CD8-positive, alpha-beta T cell (primary cell): ENCODE measurements at regions of chr7 and their contacts with region 1.

Region 1: DNA sequence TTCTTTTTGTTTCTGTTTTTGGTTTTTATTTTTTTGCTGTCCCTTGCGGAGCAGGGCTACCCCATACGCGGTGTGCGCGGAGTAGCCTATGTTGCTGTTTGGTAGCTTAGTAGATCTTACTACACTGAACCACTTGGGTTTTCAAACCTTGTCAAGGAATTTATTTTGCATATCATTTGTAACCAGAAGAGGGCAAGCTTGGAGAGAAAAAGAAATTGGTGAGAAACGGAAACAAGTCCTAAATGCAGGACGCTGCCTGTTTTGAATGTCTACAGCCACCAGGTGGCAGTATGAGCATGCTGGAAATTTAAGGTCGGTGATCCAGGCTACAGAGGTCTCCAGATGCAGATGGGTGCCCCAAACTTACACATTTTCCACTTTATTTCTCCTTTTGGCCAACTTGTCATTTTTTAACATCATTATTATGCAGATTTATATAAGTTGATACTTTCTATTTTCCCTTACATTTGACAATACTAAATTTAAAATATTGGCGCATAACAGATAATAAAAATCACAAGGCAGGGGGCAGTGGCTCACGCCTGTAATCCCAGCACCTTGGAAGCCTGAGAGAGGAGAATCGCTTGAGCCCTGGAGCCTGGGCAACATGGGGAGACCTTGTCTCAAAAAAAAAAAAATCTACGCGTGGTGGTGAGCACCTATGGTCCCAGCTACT is 15.3 kb upstream of the TRA2A start:
- DNase-seq: peak; percentile 59 to 92 (median 75)
- ATAC-seq: peak; percentile 95
- H3K4me3 ChIP-seq: no peak overlapping the region
- H3K4me3 Mint-ChIP-seq: no peak overlapping the region
- H3K27ac ChIP-seq: no peak overlapping the region
- H3K27ac Mint-ChIP-seq: no peak overlapping the region
- H3K4me1 ChIP-seq: no peaks in the 10 kb centered on the region
- H3K4me1 Mint-ChIP-seq: peaks cover 9% of the 10 kb centered on the region
- H3K27me3 ChIP-seq: no peaks in the 10 kb centered on the region
- H3K27me3 Mint-ChIP-seq: no peaks in the 10 kb centered on the region
- CTCF ChIP-seq: peak; percentile 97

Region 2: DNA sequence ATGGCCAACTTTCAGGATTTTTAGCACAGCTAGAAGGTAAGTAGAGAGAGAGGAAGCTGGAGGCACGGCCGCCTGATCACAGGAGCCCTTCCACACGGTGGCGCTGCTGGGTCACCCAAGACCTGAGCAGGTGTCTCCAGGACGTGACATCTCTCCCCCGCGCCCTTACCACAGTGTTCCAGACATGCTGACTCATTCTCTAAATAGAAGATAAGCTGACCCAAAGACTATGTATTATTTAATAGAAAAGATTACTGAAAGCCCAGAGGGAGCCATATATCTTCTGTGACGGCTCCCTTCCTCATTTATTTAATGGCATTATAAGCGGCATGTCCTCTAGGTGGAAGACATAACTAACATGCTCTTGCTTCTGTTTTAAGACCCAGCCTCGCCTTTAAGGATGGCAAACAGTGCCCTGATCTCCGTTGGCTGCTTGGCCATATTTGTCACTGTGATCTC is 273.9 kb before region 1 on chr7:
- CTCF ChIA-PET with region 1: interaction called, 9 read pairs
- POLR2A ChIA-PET with region 1: no interaction called
- intact Hi-C with region 1: loop called (anchors 1 to 2 kb)
- DNase-seq: peak; percentile 78 to 91 (median 89)
- ATAC-seq: peak; percentile 97
- H3K4me3 ChIP-seq: peak overlapping the region in 1 of 2 experiments; percentile 16
- H3K4me3 Mint-ChIP-seq: peak overlapping the region; percentile 70
- H3K27ac ChIP-seq: no peak overlapping the region
- H3K27ac Mint-ChIP-seq: no peak overlapping the region
- H3K4me1 ChIP-seq: no peaks in the 10 kb centered on the region
- H3K4me1 Mint-ChIP-seq: peaks cover 4% of the 10 kb centered on the region
- H3K27me3 ChIP-seq: no peaks in the 10 kb centered on the region
- H3K27me3 Mint-ChIP-seq: peaks cover 6% of the 10 kb centered on the region
- CTCF ChIP-seq: peak; percentile 82

Region 3: GRCh38 chr7:23520582-23520981 is 26.5 kb before region 1 on chr7:
- CTCF ChIA-PET with region 1: interaction called, 16 read pairs
- POLR2A ChIA-PET with region 1: no interaction called
- intact Hi-C with region 1: no loop called
- DNase-seq: peak in 1 of 9 experiments; percentile 37
- ATAC-seq: no peak
- H3K4me3 ChIP-seq: no peak overlapping the region
- H3K4me3 Mint-ChIP-seq: no peak overlapping the region
- H3K27ac ChIP-seq: no peak overlapping the region
- H3K27ac Mint-ChIP-seq: no peak overlapping the region
- H3K4me1 ChIP-seq: peaks cover 23% of the 10 kb centered on the region
- H3K4me1 Mint-ChIP-seq: peaks cover 49% of the 10 kb centered on the region
- H3K27me3 ChIP-seq: no peaks in the 10 kb centered on the region
- H3K27me3 Mint-ChIP-seq: no peaks in the 10 kb centered on the region
- CTCF ChIP-seq: no peak

Region 4: DNA sequence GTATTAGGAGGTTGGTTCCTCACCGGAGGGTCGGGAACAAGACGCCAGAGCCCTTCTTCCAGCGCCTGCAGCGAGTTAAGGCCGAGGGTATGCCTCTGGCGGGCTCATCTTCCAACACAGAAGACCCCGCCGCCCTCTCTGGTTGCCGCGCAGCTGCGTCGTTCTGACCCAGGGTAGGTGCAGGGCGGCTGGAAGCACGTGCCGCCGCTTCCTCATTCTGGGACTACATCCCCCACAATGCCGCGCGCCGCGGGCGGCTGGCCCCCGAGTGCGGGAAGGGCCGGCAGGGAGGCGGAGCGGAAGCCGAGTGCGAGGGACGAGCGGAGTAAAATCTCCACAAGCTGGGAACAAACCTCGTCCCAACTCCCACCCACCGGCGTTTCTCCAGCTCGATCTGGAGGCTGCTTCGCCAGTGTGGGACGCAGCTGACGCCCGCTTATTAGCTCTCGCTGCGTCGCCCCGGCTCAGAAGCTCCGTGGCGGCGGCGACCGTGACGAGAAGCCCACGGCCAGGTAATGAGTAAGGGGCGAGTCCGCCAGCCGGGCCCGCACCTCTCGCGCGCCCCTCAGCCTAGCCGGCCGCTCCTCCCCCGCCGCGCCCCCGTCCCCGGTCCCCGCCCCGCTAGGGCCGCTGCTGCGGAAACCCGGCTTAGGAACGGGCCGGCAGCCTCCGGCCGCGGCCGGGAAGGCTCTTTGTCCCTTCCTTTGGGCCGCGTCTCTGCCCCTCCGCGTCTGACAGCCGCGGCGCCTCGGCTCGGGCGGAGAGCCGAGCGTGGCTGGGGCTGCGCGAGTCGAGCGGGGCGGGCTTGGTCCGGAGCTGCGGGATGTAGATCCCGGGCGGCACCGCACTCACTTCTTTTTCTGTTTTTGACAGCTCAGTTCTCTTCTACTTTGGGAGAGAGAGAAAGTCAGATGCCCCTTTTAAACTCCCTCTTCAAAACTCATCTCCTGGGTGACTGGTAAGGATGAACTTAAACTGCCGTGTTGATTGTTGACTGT is 50.4 kb after region 1 on chr7 and contains the start of gene CCDC126:
- CTCF ChIA-PET with region 1: interaction called, 8 read pairs
- POLR2A ChIA-PET with region 1: no interaction called
- intact Hi-C with region 1: loop called (anchors 1 to 2 kb)
- DNase-seq: peak; percentile 57 to 88 (median 81)
- ATAC-seq: peak; percentile 89
- H3K4me3 ChIP-seq: peak within 1 kb of the TSS; percentile 81 to 91
- H3K4me3 Mint-ChIP-seq: peak within 1 kb of the TSS; percentile 85
- H3K27ac ChIP-seq: peak within 1 kb of the TSS; percentile 55 to 63
- H3K27ac Mint-ChIP-seq: peak within 1 kb of the TSS; percentile 49
- H3K4me1 ChIP-seq: peaks cover 21% of the 10 kb centered on the region
- H3K4me1 Mint-ChIP-seq: peaks cover 34% of the 10 kb centered on the region
- H3K27me3 ChIP-seq: no peaks in the 10 kb centered on the region
- H3K27me3 Mint-ChIP-seq: no peaks in the 10 kb centered on the region
- CTCF ChIP-seq: no peak
- total RNA-seq, gene CCDC126: 10.8 to 11.9 TPM

Region 5: GRCh38 chr7:24665564-24666294 is 1118.7 kb after region 1 on chr7:
- CTCF ChIA-PET with region 1: interaction called, 3 read pairs
- POLR2A ChIA-PET with region 1: no interaction called
- intact Hi-C with region 1: loop called in 1 of 2 experiments (anchors 1 kb)
- DNase-seq: peak in 8 of 9 experiments; percentile 1 to 65 (median 30)
- ATAC-seq: peak; percentile 49
- H3K4me3 ChIP-seq: no peak overlapping the region
- H3K4me3 Mint-ChIP-seq: no peak overlapping the region
- H3K27ac ChIP-seq: no peak overlapping the region
- H3K27ac Mint-ChIP-seq: no peak overlapping the region
- H3K4me1 ChIP-seq: no peaks in the 10 kb centered on the region
- H3K4me1 Mint-ChIP-seq: no peaks in the 10 kb centered on the region
- H3K27me3 ChIP-seq: no peaks in the 10 kb centered on the region
- H3K27me3 Mint-ChIP-seq: no peaks in the 10 kb centered on the region
- CTCF ChIP-seq: peak; percentile 84